ENCODE measurements at regions of chr3 and their contacts with region 1.

Region 1: DNA sequence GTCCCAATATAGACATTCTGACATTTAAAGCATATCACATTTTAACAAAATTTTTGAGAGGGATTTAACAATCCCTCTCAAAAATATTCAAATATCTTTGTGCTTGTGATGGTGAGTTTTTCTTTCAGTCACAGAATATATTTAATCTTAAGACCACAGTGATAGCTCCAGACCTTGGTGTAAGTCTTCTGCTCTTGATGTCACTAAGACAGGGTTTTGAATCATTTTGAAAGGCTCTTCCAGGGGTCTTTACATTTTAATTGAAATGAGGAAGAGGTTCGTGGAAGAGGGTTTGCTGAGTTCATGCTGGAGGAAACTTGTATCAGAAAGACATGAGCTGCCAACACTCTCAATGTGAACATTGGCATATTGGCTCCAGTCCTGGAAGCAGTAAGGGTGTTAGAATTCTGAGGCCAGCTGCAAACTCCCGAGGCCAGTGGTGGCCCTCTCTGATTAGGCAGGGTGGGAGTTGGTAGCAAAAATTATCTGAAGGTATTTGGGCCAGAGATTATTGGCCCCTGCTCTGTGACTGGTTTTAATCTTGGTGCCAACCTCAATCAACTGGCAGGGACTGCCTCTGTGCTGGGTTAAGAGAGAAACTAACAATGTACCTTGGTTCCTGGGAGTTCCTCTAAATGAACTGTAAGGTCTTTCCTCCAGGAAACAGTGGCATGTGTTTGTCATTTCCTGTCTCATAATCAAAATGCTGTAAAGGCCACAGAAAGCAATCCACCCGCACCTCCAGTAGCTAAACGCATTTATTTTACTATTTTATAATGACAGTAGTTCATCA is 5.3 kb downstream of the POU1F1 start:
- DNase-seq: no peak
- H3K4me3 Mint-ChIP-seq: no peak overlapping the region
- H3K27ac Mint-ChIP-seq: peak overlapping the region; percentile 28
- H3K4me1 Mint-ChIP-seq: peaks cover 43% of the 10 kb centered on the region
- H3K27me3 Mint-ChIP-seq: no peaks in the 10 kb centered on the region

Region 2: DNA sequence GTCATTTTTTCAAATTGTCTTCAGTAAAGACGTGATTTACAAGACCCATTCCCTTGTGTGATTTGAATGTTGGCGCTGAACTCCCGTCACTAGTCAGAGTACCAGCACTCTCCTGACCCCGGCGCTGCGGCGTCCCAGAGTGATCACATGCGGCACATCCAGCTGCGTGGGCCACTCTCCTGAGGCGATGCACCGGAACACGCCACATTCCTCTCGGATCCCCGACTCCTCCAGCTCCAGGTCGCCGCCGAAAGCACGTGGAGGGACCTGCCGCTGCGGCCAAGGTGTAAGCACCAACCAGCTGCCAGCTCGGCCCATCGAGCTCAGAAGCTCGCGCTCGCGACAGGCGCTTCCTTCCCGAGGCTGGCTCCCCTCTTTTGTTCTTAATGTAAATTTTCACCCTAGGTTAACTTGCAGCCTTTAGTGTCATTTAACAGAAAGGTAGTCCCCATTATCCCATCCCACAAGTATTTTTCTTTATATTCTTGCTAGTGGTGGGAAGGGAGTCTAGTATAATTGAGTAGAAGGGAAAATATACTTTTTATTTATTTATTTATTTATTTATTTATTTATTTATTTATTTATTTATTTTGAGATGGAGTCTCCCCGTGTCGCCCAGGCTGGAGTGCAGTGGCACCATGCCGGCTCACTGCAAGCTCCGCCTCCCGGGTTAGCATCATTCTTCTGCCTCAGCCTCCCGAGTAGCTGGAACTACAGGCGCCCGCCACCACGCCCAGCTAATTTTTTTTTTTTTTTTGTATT is 218.4 kb before region 1 on chr3:
- CTCF ChIA-PET with region 1: no interaction called
- POLR2A ChIA-PET with region 1: no interaction called
- DNase-seq: no peak
- H3K4me3 Mint-ChIP-seq: no peak overlapping the region
- H3K27ac Mint-ChIP-seq: no peak overlapping the region
- H3K4me1 Mint-ChIP-seq: no peaks in the 10 kb centered on the region
- H3K27me3 Mint-ChIP-seq: no peaks in the 10 kb centered on the region

Region 3: GRCh38 chr3:87260270-87260669 is 10.8 kb before region 1 on chr3:
- CTCF ChIA-PET with region 1: interaction called, 20 read pairs
- POLR2A ChIA-PET with region 1: no interaction called
- DNase-seq: peak; percentile 34
- H3K4me3 Mint-ChIP-seq: no peak overlapping the region
- H3K27ac Mint-ChIP-seq: no peak overlapping the region
- H3K4me1 Mint-ChIP-seq: peaks cover 3% of the 10 kb centered on the region
- H3K27me3 Mint-ChIP-seq: peaks cover 5% of the 10 kb centered on the region

Region 4: DNA sequence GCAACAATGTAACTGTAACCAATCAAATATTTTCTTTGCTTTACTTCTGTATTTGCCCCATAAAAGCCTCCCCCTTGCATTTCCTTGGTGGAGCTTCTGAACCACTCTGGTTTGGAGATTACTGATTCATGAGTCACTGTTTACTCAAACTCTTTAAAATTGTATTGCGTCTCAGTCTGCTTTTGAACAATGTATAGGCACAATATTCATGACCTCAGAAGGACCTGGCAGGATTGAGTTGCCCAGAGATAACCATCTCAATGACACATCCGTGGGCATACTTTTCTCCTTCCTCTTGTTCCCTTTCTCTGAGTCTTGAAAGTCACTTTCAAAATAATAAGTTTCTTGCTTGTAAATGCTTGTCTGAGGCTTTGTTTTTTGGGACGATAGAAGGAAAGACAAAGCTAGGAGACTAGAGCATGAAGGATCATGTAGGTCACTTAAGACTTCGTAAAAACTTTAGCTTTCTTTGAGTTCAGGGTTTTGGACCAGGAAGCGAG is 62.3 kb after region 1 on chr3:
- CTCF ChIA-PET with region 1: no interaction called
- POLR2A ChIA-PET with region 1: no interaction called
- DNase-seq: peak; percentile 23
- H3K4me3 Mint-ChIP-seq: no peak overlapping the region
- H3K27ac Mint-ChIP-seq: peak overlapping the region; percentile 49
- H3K4me1 Mint-ChIP-seq: peaks cover 20% of the 10 kb centered on the region
- H3K27me3 Mint-ChIP-seq: no peaks in the 10 kb centered on the region

Measured in activated CD4-positive, alpha-beta memory T cell treated with anti-CD3 and anti-CD28 coated beads, Interleukin-2, amount 10 ng/mL, durations not matched to agents 7 days and 5 days (primary cell).